Posterior cingulate gyrus (tissue), 11 donors: ENCODE measurements at regions of chr3 and their contacts with region 1.

Region 1: DNA sequence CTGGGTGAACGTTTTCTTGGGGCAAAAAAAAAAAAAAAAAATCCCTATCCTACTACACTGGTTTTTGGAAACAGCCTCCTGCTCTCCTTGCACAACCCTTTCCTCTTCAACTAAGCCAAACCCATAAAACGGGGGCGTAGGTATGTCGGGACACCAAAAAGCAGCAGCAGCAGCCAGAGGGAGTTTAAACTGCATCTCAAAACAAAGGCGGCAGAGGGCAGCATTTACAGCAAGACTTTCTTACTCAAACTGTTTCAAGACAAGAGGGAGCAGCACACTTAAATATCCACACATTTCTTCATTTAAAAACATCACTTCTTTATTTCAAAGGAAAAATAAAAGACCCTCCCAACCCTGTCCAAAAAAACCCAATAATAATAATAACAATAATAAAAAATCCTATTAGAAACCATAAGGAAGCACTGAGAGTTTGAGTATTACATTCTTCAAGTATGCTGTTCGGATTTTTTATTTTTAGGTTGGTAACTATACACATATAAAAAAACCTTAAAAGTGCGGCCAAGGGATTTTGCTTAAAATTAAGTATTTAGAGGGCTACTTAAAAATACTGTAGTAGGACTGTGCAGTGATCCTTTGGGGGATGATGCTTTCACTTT is 43.9 kb upstream of the PLXND1 start:
- DNase-seq: peak in 8 of 10 donors; percentile 43 to 94 (median 73)

Region 2: GRCh38 chr3:129389572-129389937 is 260.8 kb before region 1 on chr3:
- intact Hi-C with region 1: no loop called
- DNase-seq: no peak

Region 3: GRCh38 chr3:129673882-129674797 is 23.8 kb after region 1 on chr3:
- intact Hi-C with region 1: no loop called
- DNase-seq: no peak

Region 4: DNA sequence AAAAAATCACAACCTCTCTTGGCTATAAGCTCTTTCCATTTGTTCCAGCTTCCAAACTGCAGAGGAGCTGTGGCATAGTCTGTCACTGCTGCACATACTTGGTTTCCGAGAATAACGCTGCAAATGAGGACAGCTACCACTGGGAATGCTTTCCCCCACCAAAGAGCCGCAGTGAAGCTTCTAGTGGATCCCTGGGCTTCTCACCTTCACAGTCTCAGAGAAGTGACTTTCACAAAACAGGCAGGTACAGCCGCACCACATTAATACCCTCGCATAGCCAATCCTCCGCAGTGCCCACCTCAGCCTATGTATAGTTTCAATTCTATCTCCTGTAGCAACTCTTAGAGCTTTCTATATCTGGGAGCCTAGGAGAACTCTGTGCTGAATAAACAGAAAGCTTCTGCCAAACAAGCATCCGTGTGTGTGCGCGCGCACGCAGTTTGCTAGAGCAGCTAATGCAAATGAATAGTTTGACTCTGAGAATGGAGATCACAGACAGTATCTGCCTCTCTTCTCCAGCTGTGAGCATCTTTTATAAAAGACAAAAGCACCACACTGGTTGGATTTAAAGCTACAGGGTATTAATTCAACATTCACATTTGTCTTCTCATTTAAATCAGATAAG is 38.0 kb after region 1 on chr3:
- intact Hi-C with region 1: loop called (anchors 5 kb)
- DNase-seq: peak; percentile 82 to 98 (median 88)

Region 5: DNA sequence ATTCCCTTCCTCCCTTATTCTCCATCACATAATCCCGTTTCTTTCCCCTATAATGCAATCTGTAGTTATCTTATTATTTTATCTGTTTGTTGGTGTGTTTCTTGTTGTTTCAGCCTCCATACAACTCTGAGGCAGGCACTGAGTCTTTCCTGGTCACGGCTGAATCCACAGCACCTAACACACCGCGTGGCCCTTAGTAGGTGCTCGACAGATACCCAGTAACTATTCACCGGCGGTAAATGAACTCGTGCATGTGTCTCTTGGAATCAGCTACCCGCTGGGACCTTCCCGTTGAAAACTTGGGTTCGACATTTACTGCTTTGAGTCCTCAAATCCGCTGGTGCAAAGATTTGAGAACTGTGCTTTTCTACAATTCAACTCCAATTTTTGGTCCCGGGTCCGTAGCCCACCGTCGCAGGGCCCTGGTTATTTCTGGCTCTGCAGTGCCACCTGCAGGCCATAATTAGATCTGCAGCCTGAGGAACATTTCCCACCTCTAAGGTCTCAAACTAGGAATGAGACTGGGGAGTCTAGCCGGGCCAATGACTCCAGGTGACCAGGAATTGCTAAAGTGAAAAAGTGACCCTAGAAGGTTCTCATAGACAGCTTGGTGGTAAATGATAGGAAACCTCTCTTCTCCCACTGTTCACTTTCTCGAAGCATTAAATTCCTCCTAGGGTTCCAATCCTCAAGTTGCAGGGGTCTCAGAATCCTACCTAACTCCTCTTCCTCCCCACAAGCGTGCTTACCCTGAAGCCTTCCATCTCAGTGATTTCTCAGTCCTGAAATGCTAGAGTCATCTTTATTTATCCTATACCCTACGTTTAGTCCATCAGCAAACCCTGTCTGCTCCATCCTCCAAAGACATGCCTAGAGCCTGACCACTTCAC is 284.1 kb after region 1 on chr3:
- intact Hi-C with region 1: loop called (anchors 5 kb)
- DNase-seq: peak in 6 of 10 donors; percentile 16 to 78 (median 40)